Astrocyte of the cerebellum (primary cell): ENCODE measurements at regions of chr1 and their contacts with region 1.

Region 1: DNA sequence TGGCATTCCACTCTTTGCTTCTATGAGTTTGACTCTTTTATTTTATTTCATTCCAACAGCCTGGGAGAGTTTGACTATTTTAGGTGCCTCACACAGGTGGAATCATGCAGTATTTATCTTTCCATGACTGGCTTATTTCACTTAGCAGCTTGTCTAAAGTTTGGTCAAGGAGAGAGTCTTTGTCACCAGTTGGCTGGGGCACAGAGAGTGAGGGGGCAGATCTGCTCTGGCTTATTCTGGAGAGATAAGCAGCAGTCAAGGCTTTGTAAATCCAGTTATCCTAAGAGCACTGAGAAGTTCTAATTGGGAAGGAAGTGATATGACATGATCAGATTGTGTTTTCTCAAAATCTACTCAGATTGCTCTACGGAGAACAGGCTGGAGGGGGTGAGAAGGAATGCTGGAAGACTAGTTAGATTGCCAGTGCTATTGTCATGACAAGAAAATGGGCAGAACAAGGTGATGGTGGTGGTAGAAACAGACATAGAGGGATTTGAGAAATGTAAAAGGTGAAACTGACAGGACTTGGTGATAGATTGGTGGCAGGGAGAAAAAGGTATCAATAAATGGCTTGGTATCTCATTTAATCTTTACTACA is 12.2 kb upstream of the CTTNBP2NL start:
- DNase-seq: no peak
- H3K4me3 ChIP-seq: no peak overlapping the region
- CTCF ChIP-seq: no peak

Region 2: GRCh38 chr1:112230232-112230631 is 153.6 kb before region 1 on chr1:
- in situ Hi-C with region 1: no loop called
- DNase-seq: no peak
- H3K4me3 ChIP-seq: no peak overlapping the region
- CTCF ChIP-seq: no peak

Region 3: GRCh38 chr1:112614460-112615065 is 230.7 kb after region 1 on chr1:
- in situ Hi-C with region 1: loop called (anchors 5 kb)
- DNase-seq: peak; percentile 48
- H3K4me3 ChIP-seq: no peak overlapping the region
- CTCF ChIP-seq: peak; percentile 76